ENCODE measurements at regions of chr4 and their contacts with region 1.

Region 1: DNA sequence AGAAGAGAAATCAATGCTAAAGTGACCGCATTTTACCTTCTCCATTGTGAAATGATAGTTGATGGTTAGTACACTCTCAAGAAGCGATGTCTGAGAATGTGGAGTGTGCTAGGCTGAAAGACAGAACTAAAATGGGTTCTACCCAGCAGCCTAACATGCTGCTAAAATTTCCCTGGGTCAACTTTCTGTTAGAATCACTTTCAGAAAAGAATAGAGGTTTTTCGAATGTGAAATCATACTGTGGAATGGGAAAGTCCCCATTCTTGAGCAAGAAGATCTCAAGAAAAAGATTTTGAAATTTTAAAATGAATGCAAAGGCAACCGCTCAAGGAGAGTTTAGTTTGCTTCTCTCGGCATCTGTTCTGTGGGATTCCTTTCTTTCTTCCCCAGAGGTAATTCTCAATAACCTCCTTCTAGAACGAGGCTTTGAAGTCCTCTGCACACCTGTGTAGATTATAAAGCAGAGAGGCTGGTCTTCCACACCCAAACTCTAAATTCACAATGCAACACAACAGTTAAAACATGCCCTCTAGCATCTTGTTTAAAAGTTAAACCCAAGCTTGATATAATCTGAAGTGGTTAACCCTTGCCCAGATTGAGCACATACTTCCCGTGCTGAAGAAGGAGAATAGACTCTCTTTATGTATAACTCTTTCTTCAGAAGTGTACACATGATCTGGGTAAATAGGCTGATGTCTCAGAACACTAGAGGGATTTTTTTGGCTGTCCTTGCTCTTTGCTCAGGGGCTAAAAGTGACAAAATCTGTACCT is 208.7 kb upstream of the KLF3 start:
- DNase-seq: no peak
- H3K4me3 Mint-ChIP-seq: no peak overlapping the region
- H3K27ac Mint-ChIP-seq: peak overlapping the region; percentile 74
- H3K4me1 Mint-ChIP-seq: peaks cover 45% of the 10 kb centered on the region
- H3K27me3 Mint-ChIP-seq: peaks cover 12% of the 10 kb centered on the region

Region 2: DNA sequence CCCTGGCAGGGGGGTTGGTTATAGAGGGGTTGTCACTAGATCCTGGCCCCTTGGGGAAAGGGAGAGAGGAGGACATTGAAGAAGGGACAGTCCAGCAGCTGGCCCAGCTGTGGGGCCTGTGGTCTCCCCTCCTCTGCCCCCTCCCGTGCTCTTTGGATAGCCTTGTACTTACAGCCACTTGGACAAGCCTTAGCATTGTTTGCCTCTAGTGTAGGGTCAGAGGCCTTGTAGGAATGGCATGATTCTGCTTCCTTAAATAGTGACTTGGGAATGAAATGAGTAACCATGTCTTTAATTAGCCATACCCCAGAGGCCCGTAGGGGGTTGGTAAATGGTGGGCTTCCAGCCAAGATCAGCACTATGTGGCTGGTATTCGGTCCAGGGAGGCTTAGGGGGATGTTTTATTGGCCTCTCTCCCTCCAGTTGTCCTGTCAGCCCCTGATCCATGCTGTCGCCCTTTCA is 264.5 kb before region 1 on chr4:
- intact Hi-C with region 1: no loop called
- DNase-seq: no peak
- H3K4me3 Mint-ChIP-seq: no peak overlapping the region
- H3K27ac Mint-ChIP-seq: no peak overlapping the region
- H3K4me1 Mint-ChIP-seq: no peaks in the 10 kb centered on the region
- H3K27me3 Mint-ChIP-seq: peaks cover 29% of the 10 kb centered on the region

Region 3: GRCh38 chr4:38509551-38509950 is 54.3 kb after region 1 on chr4:
- intact Hi-C with region 1: loop called (anchors 5 kb)
- DNase-seq: peak; percentile 25
- H3K4me3 Mint-ChIP-seq: peak overlapping the region; percentile 24
- H3K27ac Mint-ChIP-seq: no peak overlapping the region
- H3K4me1 Mint-ChIP-seq: peaks cover 60% of the 10 kb centered on the region
- H3K27me3 Mint-ChIP-seq: peaks cover 57% of the 10 kb centered on the region

Measured in activated T-helper 2 cell treated with anti-CD3 and anti-CD28 coated beads, Interferon-gamma antibody, Interleukin-2, Interleukin-4, amounts not matched to agents 10 μg/mL and 5 μg/mL and 100 μg/mL, durations not matched to agents 14 hours and 24 hours and 36 hours (primary cell).